GM12878 (cell line): ENCODE measurements at regions of chr20 and their contacts with region 1.

Region 1: GRCh38 chr20:40160097-40160550 is 528.9 kb downstream of the MAFB start:
- DNase-seq: peak; percentile 7
- ATAC-seq: peak; percentile 81
- H3K4me3 ChIP-seq: no peak overlapping the region
- H3K27ac ChIP-seq: no peak overlapping the region
- H3K4me1 ChIP-seq: peaks cover 13% of the 10 kb centered on the region
- H3K27me3 ChIP-seq: no peaks in the 10 kb centered on the region
- CTCF ChIP-seq: peak; percentile 61 to 76 (median 73)
- EP300 ChIP-seq: no peak
- POLR2A ChIP-seq: no peak
- RAD21 ChIP-seq: peak; percentile 71

Region 2: GRCh38 chr20:40100261-40100660 is 59.9 kb before region 1 on chr20:
- CTCF ChIA-PET with region 1: no interaction called
- POLR2A ChIA-PET with region 1: no interaction called
- RAD21 ChIA-PET with region 1: no interaction called
- SMC1A ChIA-PET with region 1: no interaction called
- in situ Hi-C with region 1: no loop called
- intact Hi-C with region 1: no loop called
- DNase-seq: no peak
- ATAC-seq: no peak
- H3K4me3 ChIP-seq: no peak overlapping the region
- H3K27ac ChIP-seq: no peak overlapping the region
- H3K4me1 ChIP-seq: no peaks in the 10 kb centered on the region
- H3K27me3 ChIP-seq: no peaks in the 10 kb centered on the region
- CTCF ChIP-seq: no peak
- EP300 ChIP-seq: no peak
- POLR2A ChIP-seq: no peak
- RAD21 ChIP-seq: no peak

Region 3: GRCh38 chr20:40144581-40144980 is 15.5 kb before region 1 on chr20:
- CTCF ChIA-PET with region 1: interaction called, 11 read pairs
- POLR2A ChIA-PET with region 1: no interaction called
- RAD21 ChIA-PET with region 1: interaction called, 3 read pairs
- SMC1A ChIA-PET with region 1: interaction called, 3 read pairs
- in situ Hi-C with region 1: no loop called
- intact Hi-C with region 1: no loop called
- DNase-seq: no peak
- ATAC-seq: no peak
- H3K4me3 ChIP-seq: no peak overlapping the region
- H3K27ac ChIP-seq: no peak overlapping the region
- H3K4me1 ChIP-seq: no peaks in the 10 kb centered on the region
- H3K27me3 ChIP-seq: no peaks in the 10 kb centered on the region; a peak in 2 of 4 replicates
- CTCF ChIP-seq: no peak
- EP300 ChIP-seq: no peak
- POLR2A ChIP-seq: no peak
- RAD21 ChIP-seq: no peak